ENCODE measurements at regions of chr1 and their contacts with region 1.

Region 1: GRCh38 chr1:24415334-24415909 is at the start of gene NIPAL3:
- DNase-seq: peak; percentile 94 to 99
- ATAC-seq: peak; percentile 95 to 98 (median 98)
- H3K4me3 ChIP-seq: peak within 1 kb of the TSS; percentile 57
- H3K4me3 Mint-ChIP-seq: peak within 1 kb of the TSS; percentile 98
- H3K27ac ChIP-seq: peak within 1 kb of the TSS; percentile 33
- H3K27ac Mint-ChIP-seq: peak within 1 kb of the TSS; percentile 81 to 92
- H3K4me1 ChIP-seq: peaks cover 32% of the 10 kb centered on the region
- H3K4me1 Mint-ChIP-seq: peaks cover 46 to 48% of the 10 kb centered on the region in 2 donors
- H3K27me3 ChIP-seq: no peaks in the 10 kb centered on the region
- H3K27me3 Mint-ChIP-seq: peaks cover 0 to 8% of the 10 kb centered on the region in 2 donors
- CTCF ChIP-seq: peak; percentile 83
- total RNA-seq, gene NIPAL3: 16.6 to 31.9 (median 29.4) TPM

Region 2: DNA sequence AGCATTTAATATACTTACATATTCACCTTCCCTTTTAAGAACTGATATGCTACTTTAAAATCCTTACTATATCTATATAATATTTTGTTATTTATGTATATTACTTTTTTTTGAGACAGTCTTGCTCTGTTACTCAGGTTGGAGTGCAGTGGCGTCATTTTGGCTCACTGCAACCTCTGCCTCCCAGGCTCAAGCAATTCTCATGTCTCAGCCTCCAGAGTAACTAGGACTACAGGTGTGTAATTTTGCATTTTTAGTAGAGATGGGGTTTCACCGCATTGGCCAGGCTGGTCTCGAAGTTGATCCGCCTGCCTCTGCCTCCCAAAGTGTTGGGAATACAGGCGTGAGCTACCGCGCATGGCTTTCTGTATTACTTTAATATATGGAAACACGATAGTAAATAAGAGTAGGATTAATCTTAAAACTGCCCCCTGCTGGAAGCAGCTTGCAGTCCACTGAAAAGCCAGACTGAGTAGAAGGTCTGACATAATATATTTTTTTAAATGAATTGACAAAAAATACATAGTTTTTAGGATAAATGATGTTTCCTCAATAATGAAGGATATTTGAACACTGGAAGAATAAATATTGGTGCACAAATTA is 111.6 kb after region 1 on chr1:
- intact Hi-C with region 1: loop called (anchors 1 kb)
- DNase-seq: peak in 1 of 2 donors; percentile 74
- ATAC-seq: peak in 1 of 3 donors; percentile 42
- H3K4me3 ChIP-seq: no peak overlapping the region
- H3K4me3 Mint-ChIP-seq: no peak overlapping the region
- H3K27ac ChIP-seq: no peak overlapping the region
- H3K27ac Mint-ChIP-seq: no peak overlapping the region
- H3K4me1 ChIP-seq: no peaks in the 10 kb centered on the region
- H3K4me1 Mint-ChIP-seq: no peaks in the 10 kb centered on the region
- H3K27me3 ChIP-seq: no peaks in the 10 kb centered on the region
- H3K27me3 Mint-ChIP-seq: peaks cover 9 to 44% of the 10 kb centered on the region in 2 donors
- CTCF ChIP-seq: peak; percentile 54

Region 3: GRCh38 chr1:24586970-24587820 is 171.8 kb after region 1 on chr1:
- intact Hi-C with region 1: loop called (anchors 1 kb)
- DNase-seq: peak in 1 of 2 donors; percentile 89
- ATAC-seq: peak; percentile 87 to 99 (median 96)
- H3K4me3 ChIP-seq: no peak overlapping the region
- H3K4me3 Mint-ChIP-seq: no peak overlapping the region
- H3K27ac ChIP-seq: no peak overlapping the region
- H3K27ac Mint-ChIP-seq: no peak overlapping the region
- H3K4me1 ChIP-seq: peaks cover 15% of the 10 kb centered on the region
- H3K4me1 Mint-ChIP-seq: peaks cover 0 to 5% of the 10 kb centered on the region in 2 donors
- H3K27me3 ChIP-seq: no peaks in the 10 kb centered on the region
- H3K27me3 Mint-ChIP-seq: peaks cover 8 to 12% of the 10 kb centered on the region in 2 donors
- CTCF ChIP-seq: peak; percentile 78

Region 4: DNA sequence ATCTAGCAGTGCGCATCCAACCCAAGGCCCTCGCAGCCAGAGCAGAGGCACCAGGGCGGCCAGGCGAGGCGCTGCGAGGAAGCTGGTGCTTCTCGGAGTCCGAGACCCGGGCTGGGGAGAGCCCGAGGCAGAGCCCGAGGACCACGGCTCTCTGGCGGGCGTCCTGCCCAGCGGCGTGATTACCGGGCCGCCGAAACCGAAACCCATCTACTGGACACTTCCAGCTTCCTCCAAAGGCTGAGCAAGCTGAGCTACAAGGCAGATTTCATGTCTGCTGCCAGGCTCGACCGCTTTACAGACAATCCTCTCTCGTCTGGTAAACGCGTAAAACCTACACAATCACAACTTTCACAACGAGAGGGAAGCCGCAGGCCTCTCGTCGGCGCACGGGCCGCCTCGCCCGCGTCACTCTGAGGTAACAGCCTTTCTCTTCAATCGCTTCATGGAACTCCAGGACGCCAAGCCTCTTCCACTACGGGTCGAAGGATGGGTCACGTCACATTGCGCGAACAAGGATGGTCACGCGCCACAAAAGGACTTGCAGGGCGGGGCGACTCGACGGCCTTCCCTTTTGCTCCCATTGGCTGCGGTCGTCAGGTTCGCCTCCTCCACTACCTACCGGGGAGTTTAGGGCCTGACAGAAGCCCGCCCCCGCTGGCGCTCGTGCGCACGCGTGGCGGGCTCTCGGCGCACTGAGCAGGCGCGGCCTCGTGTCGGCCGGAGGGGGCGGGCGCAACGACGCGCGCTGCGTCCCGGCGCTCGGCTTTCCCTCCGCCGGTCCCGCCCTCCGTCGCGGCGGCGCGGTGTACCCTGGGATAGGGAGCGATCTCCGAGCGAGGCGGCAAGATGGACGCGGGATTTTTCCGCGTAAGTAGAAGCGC is 227.3 kb after region 1 on chr1 and contains the start of gene SRRM1:
- intact Hi-C with region 1: loop called (anchors 5 kb)
- DNase-seq: peak; percentile 96 to 100
- ATAC-seq: peak; percentile 86 to 96 (median 87)
- H3K4me3 ChIP-seq: peak within 1 kb of the TSS; percentile 98
- H3K4me3 Mint-ChIP-seq: peak within 1 kb of the TSS; percentile 97
- H3K27ac ChIP-seq: peak within 1 kb of the TSS; percentile 100
- H3K27ac Mint-ChIP-seq: peak within 1 kb of the TSS; percentile 96 to 98
- H3K4me1 ChIP-seq: peaks cover 19% of the 10 kb centered on the region
- H3K4me1 Mint-ChIP-seq: peaks cover 44 to 49% of the 10 kb centered on the region in 2 donors
- H3K27me3 ChIP-seq: no peaks in the 10 kb centered on the region
- H3K27me3 Mint-ChIP-seq: no peaks in the 10 kb centered on the region
- CTCF ChIP-seq: no peak
- total RNA-seq, gene SRRM1: 291 to 314 (median 302) TPM

Region 5: DNA sequence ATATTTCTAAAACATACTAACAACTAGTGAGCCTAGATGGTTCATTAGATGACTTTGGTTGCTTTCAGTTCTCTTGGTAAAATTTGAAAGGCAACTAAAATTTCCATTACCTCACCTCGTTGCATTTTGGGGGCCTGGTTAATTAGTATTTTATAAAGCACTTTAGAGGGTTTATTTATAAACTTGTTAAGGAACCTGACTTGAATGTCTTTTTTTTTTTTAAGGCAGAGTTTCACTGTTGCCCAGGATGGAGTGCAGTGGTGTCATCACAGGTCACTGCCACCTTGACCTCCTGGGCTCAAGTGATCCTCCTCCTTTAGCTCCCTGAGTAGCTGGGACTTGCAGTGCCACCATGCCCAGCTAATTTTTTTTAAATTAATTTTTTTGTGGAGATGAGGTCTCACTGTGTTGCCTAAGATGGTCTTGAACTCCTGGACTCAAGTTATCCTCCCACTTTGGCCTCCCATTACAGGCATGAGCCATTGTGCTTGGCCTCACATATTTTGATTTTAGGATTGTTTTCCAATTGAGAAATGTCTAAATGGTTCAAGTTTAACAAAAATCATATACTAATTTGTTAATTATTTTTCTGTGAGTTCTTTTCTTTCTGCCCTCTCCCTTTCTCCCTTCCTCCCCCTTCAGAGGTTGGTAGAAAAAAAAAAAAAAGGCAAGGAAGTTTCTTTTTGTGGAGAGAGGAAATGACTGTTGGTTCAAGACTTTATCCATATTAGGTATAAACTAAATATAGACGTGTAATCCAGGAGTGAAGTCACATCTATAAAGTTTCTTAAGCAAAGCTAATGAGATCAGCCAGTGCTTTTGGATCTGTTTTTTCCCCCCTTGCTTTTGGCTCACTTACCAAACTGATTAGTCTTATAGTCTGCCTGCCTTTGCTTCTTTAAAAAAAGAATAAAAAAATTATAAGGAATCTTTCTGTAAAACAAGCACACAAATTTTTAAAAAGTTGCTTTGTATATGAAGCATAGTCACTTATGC is 354.5 kb after region 1 on chr1:
- intact Hi-C with region 1: no loop called
- DNase-seq: no peak
- ATAC-seq: no peak
- H3K4me3 ChIP-seq: no peak overlapping the region
- H3K4me3 Mint-ChIP-seq: no peak overlapping the region
- H3K27ac ChIP-seq: no peak overlapping the region
- H3K27ac Mint-ChIP-seq: no peak overlapping the region
- H3K4me1 ChIP-seq: no peaks in the 10 kb centered on the region
- H3K4me1 Mint-ChIP-seq: no peaks in the 10 kb centered on the region
- H3K27me3 ChIP-seq: no peaks in the 10 kb centered on the region
- H3K27me3 Mint-ChIP-seq: peaks cover 0 to 3% of the 10 kb centered on the region in 2 donors
- CTCF ChIP-seq: no peak